Endothelial cell of umbilical vein (primary cell): ENCODE measurements at regions of chr6 and their contacts with region 1.

Region 1: DNA sequence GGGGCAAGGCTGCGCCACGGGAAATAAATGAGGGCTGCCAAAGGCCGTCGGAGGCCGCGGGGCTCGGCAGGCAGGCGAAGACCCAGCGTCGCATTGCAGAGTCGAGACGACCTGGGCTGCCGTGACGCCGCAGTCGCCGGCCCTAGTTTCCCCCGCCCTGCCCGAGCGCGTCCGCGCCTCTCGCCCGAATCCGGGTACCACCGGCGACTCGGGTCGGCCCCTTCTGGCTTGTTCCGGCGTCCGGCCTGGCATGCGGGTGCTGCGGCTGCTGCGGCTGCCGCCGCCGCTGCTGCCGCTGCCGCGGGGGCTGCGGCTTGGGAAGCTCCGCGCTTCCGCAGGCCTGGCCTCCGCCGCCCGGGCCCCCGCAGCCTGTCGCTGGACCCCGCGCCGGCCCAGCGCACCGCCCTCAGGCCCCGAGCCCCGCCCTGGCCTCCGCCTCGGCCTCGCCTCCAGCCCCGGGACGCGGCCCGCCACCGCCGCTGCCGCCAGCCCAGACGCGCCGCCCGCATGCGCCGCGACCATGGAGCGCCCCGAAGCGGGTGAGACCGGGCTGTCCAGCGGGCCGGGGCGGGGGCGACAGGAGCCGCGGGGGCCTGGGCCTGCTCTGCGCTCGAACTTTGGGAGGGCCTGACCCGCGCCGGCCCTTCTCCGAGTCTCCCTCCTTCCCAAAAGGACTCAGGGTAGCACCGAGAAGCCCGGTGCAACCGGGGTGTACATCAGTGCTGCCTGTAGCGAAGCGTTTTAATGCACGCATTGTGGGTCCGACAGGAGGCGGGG is at the start of gene AKAP7:
- DNase-seq: peak; percentile 67
- H3K4me3 ChIP-seq: peak within 1 kb of the TSS; percentile 60 to 94 (median 93)
- H3K27ac ChIP-seq: peak within 1 kb of the TSS; percentile 56
- H3K4me1 ChIP-seq: peaks cover 8% of the 10 kb centered on the region
- H3K27me3 ChIP-seq: no peaks in the 10 kb centered on the region
- CTCF ChIP-seq: no peak
- POLR2A ChIP-seq: peak; percentile 64
- total RNA-seq, gene AKAP7: 3.3 and 4.8 TPM in 2 replicates

Region 2: GRCh38 chr6:130560231-130560630 is 575.2 kb before region 1 on chr6:
- CTCF ChIA-PET with region 1: no interaction called
- POLR2A ChIA-PET with region 1: no interaction called
- dilution Hi-C with region 1: no loop called
- intact Hi-C with region 1: no loop called
- DNase-seq: no peak
- H3K4me3 ChIP-seq: no peak overlapping the region
- H3K27ac ChIP-seq: no peak overlapping the region
- H3K4me1 ChIP-seq: no peaks in the 10 kb centered on the region
- H3K27me3 ChIP-seq: no peaks in the 10 kb centered on the region
- CTCF ChIP-seq: no peak
- POLR2A ChIP-seq: no peak

Region 3: GRCh38 chr6:131107151-131107550 is 28.3 kb before region 1 on chr6:
- CTCF ChIA-PET with region 1: no interaction called
- POLR2A ChIA-PET with region 1: no interaction called
- dilution Hi-C with region 1: no loop called
- intact Hi-C with region 1: loop called (anchors 2 kb)
- DNase-seq: peak; percentile 88
- H3K4me3 ChIP-seq: no peak overlapping the region
- H3K27ac ChIP-seq: peak overlapping the region; percentile 55
- H3K4me1 ChIP-seq: peaks cover 21% of the 10 kb centered on the region
- H3K27me3 ChIP-seq: no peaks in the 10 kb centered on the region
- CTCF ChIP-seq: no peak
- POLR2A ChIP-seq: peak; percentile 47